ENCODE measurements at regions of chr5 and their contacts with region 1.

Region 1: DNA sequence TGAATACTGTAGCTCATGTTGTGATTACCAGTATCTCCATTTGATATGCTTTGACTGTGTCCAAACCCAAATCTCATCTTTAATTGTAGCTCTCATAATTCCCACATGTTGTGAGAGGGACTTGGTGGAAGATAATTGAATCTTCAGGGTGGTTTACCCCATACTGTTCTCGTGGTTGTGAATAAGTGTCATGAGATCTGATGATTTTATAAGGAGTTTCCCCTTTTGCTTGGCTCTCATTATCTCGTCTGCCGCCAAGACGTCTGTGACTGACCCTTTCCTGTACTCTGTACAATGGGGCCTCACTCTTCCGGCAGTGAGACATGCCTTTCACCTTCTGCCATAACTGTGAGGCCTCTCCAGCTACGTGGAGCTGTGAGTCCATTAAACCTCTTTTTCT is 59.3 kb downstream of the TRIO start:
- DNase-seq: no peak
- CTCF ChIP-seq: no peak

Region 2: DNA sequence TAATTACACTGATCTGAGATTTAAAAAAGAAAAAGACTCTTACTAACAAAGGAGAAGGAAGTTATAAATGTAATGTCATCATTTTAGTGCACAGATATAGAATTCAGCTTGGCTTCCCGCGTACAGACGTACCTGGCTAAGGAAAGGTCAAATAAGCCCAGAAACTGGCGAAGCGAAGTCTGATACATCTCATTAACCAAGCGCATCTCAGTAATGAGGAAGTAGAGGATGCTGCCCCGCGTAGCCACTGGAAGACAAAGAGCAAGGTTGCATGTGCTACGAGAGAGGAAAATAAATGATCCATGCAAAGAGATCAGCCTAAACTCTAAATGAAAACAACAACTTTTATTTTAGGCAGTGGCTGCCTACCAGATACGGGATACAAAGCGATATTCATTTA is 466.8 kb before region 1 on chr5:
- CTCF ChIA-PET with region 1: no interaction called
- POLR2A ChIA-PET with region 1: no interaction called
- DNase-seq: no peak
- CTCF ChIP-seq: no peak

Region 3: DNA sequence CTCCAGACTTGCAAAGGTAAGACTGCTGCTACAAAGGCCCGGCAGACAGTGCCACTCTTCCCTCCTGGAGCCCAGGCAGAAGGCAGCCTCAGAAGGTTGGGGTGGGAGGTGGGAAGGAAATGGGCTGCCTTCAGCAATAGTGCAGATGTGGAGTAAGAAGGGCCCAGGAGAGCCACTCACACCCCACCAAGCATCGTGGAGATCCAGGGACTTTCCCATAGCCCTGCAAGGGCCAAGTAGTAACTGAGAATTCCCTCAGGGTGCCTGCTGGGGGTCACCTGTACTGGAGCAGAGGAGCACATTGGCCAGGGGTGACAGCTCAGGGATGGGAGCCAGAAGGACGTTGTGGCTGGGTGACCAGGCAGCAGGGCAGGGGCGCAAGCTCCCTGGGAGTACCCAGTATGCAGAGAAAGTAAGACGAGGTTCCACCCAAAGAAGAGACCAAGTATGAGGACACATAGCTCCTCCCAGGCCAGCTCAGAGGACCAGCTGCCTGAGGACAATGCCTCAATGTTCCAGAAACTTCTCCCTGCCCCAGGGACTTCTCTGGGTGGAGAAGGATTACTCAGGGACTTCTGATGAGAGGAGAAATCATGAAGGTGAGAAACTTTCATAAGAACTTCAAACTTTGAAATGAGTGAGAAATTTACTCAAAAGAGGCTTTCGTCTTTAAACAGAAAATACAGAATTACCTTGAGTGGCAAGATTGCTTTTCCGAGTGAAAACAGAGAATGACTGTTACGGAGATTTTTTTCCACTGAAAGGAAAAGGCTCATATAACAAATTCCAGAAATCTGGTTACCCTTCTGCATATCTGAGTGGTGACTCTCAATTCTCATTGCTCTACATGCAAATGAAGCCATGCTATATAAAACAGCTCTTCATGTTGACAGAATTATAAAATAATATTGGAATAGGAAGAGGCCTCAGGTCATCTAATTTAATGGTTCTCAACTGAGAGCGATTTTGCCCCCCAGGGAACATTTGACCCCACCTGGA is 147.2 kb before region 1 on chr5:
- CTCF ChIA-PET with region 1: no interaction called
- POLR2A ChIA-PET with region 1: no interaction called
- DNase-seq: no peak
- CTCF ChIP-seq: no peak

Region 4: DNA sequence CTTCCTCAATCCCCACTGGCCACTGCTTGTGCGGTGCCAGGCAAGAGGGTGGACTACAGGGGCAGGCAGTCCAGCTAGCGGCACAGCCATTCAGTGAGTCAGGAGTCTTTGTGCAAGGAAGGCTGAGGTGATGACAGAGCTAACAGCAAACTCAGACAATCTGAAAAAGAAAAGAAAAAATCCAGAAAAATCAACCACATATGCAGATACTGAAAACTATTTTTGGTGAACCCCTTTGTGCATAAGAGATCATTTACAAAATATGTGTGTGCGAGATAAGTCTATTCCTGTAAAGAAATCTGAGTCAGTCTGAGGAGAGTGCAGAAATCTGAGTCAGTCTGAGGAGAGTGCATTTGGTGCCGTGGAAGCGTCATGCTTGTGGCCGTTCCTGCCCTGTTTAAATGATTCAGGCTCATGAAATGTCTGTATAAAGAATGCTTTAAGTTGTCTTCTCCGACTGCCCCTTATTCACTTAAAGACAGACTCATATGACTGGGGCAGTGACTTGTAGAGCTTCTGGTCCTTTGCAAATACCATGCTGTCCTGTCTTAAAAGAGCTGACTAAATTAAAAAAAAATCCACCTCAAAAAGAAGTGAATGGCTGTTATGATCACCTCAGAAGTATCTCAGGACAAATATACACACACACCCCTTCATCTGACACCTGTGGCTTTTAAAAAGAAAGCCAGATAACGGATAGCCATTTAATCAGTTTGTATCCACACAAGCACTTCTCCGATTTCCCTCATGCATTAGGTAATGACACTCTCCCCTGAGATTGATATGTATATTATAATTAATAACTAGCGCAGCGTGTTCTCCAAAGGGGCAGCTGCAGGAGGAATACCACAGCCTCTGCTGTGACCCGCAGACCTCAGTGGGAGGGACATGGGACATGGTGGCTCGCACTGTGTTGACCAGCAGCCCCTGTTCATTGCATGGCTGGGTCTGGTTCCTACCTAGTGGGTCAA is 12.0 kb before region 1 on chr5:
- CTCF ChIA-PET with region 1: interaction called, 7 read pairs
- POLR2A ChIA-PET with region 1: interaction called, 10 read pairs
- DNase-seq: no peak
- CTCF ChIP-seq: no peak

Region 5: DNA sequence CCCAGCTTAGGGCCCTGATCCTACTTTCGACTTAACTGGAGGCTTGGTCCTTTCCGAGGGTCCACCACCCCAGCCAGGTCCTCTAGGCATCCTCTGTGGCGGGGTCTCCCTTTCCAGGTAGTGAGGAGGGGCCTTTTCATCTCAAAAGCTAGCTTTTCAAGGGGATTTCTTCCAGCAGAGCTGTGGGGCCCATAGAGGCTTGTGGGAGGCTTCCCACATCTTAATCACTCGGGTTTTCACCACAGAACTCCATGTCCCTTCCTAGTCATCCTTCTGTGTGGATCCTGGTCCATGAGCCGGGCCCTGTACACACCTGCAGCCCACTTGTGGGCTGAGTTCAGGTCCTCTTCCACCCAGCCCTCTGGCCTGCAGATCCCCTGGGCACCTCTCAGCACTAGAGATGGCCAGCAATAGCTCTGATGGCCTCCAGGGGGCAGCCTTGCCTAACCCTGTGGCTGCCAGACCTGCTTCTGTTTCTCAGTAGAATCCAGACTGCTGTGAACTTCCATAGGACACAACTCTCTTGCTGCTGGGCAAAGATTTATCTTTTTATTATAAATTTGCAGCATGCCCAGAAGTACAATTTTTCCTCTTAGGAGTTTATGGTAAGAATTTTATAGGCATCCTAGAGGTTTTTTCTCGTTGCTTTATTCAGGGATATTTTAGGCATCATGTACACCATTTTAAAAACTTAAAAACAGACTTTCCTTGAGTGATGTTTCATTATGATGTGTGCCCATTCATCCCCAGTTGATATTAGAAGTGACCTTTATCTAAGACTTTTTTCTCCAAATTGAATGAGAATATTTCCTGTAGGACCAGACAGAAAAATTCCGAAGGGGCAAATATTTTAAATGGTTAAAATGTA is 149.6 kb after region 1 on chr5:
- CTCF ChIA-PET with region 1: no interaction called
- POLR2A ChIA-PET with region 1: no interaction called
- DNase-seq: peak; percentile 78
- CTCF ChIP-seq: peak; percentile 98